ENCODE measurements at regions of chr16 and their contacts with region 1.

Region 1: GRCh38 chr16:27313422-27314160 is at the start of gene IL4R:
- DNase-seq: peak; percentile 77
- ATAC-seq: peak; percentile 49
- H3K4me3 Mint-ChIP-seq: peak within 1 kb of the TSS; percentile 88
- H3K27ac Mint-ChIP-seq: peak within 1 kb of the TSS; percentile 90
- H3K4me1 Mint-ChIP-seq: peaks cover 76% of the 10 kb centered on the region
- H3K27me3 Mint-ChIP-seq: no peaks in the 10 kb centered on the region
- CTCF ChIP-seq: no peak
- total RNA-seq, gene IL4R: 176 and 202 TPM in 2 replicates

Region 2: GRCh38 chr16:27253526-27253930 is 60.1 kb before region 1 on chr16:
- CTCF ChIA-PET with region 1: interaction called, 3 read pairs
- POLR2A ChIA-PET with region 1: interaction called, 13 read pairs
- intact Hi-C with region 1: loop called (anchors 5 kb)
- DNase-seq: no peak
- ATAC-seq: peak; percentile 40
- H3K4me3 Mint-ChIP-seq: peak overlapping the region; percentile 65
- H3K27ac Mint-ChIP-seq: peak overlapping the region; percentile 88
- H3K4me1 Mint-ChIP-seq: peaks cover 65% of the 10 kb centered on the region
- H3K27me3 Mint-ChIP-seq: no peaks in the 10 kb centered on the region
- CTCF ChIP-seq: no peak

Region 3: GRCh38 chr16:27268376-27269299 is 45.0 kb before region 1 on chr16 and contains the start of gene NSMCE1:
- CTCF ChIA-PET with region 1: interaction called, 3 read pairs
- POLR2A ChIA-PET with region 1: interaction called, 5 read pairs
- intact Hi-C with region 1: loop called (anchors 2 kb)
- DNase-seq: peak; percentile 92
- ATAC-seq: peak; percentile 97
- H3K4me3 Mint-ChIP-seq: peak within 1 kb of the TSS; percentile 96
- H3K27ac Mint-ChIP-seq: peak within 1 kb of the TSS; percentile 99
- H3K4me1 Mint-ChIP-seq: peaks cover 73% of the 10 kb centered on the region
- H3K27me3 Mint-ChIP-seq: no peaks in the 10 kb centered on the region
- CTCF ChIP-seq: no peak
- total RNA-seq, gene NSMCE1: 61.0 and 68.3 TPM in 2 replicates

Region 4: GRCh38 chr16:27301236-27301861 is 12.2 kb before region 1 on chr16:
- CTCF ChIA-PET with region 1: no interaction called
- POLR2A ChIA-PET with region 1: interaction called, 12 read pairs
- intact Hi-C with region 1: loop called (anchors 2 kb)
- DNase-seq: no peak
- ATAC-seq: no peak
- H3K4me3 Mint-ChIP-seq: no peak overlapping the region
- H3K27ac Mint-ChIP-seq: peak overlapping the region; percentile 42
- H3K4me1 Mint-ChIP-seq: peaks cover 88% of the 10 kb centered on the region
- H3K27me3 Mint-ChIP-seq: no peaks in the 10 kb centered on the region
- CTCF ChIP-seq: no peak

Region 5: DNA sequence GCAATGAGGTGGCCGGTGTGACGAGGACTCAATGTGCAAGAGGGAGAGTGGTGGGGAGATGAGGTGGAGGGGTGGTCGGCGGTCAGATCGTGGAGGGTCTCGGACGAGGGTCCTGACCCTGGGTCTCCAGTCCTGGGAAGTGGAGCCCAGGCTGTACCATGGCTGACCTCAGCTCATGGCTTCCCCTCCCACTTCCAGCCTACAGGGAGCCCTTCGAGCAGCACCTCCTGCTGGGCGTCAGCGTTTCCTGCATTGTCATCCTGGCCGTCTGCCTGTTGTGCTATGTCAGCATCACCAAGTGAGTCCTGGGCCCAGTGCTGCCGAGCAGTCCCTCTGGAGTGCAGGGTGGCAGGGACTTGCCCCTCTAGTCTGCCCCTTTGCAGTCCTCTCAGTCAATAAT is 42.0 kb after region 1 on chr16:
- CTCF ChIA-PET with region 1: interaction called, 3 read pairs
- POLR2A ChIA-PET with region 1: no interaction called
- intact Hi-C with region 1: loop called (anchors 5 kb)
- DNase-seq: no peak
- ATAC-seq: peak; percentile 56
- H3K4me3 Mint-ChIP-seq: no peak overlapping the region
- H3K27ac Mint-ChIP-seq: peak overlapping the region; percentile 54
- H3K4me1 Mint-ChIP-seq: peaks cover 6% of the 10 kb centered on the region
- H3K27me3 Mint-ChIP-seq: no peaks in the 10 kb centered on the region
- CTCF ChIP-seq: no peak

Region 6: GRCh38 chr16:27475561-27475960 is 162.0 kb after region 1 on chr16:
- CTCF ChIA-PET with region 1: no interaction called
- POLR2A ChIA-PET with region 1: no interaction called
- intact Hi-C with region 1: no loop called
- DNase-seq: no peak
- ATAC-seq: no peak
- H3K4me3 Mint-ChIP-seq: no peak overlapping the region
- H3K27ac Mint-ChIP-seq: no peak overlapping the region
- H3K4me1 Mint-ChIP-seq: no peaks in the 10 kb centered on the region
- H3K27me3 Mint-ChIP-seq: no peaks in the 10 kb centered on the region
- CTCF ChIP-seq: no peak

Region 7: DNA sequence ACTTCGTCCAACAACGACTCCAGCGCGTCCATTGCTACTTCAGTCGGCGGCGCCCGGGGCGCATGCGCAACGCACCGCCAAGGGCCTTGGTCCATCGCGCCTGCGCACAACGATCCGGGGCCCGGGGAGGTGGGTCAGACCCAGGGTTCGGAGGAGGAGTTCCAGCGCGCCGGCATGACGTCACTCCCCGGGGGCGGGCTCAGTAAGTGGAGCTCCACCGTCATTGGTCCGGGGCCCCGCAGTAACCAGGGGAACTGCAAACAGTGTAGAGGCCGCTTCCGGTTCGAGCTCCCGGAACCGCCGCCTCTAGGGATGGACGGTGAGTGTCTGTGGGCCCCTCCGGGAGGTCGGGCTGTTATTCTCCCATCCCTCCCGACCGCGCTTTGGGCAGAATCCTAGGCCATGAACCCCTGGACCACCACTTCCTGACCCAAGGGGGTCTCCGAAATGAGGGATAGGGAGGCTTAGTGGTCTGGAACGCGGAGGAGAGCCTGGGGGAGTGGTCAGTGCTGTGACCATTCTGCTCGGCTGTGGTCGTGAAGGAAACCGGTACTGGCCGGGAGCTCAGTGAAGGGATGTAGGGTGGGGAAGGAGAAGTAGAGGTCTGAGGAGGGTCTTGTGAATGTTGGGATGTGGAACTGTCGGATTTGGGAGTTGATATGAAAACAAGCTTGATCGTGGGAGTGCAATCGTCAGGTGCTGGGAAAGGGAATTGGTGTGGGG is 236.4 kb after region 1 on chr16 and contains the starts of genes GTF3C1 and KATNIP:
- CTCF ChIA-PET with region 1: no interaction called
- POLR2A ChIA-PET with region 1: no interaction called
- intact Hi-C with region 1: loop called (anchors 10 kb)
- DNase-seq: peak; percentile 100
- ATAC-seq: peak; percentile 99
- H3K4me3 Mint-ChIP-seq: peak within 1 kb of the TSS; percentile 95
- H3K27ac Mint-ChIP-seq: peak within 1 kb of the TSS; percentile 94
- H3K4me1 Mint-ChIP-seq: peaks cover 34% of the 10 kb centered on the region
- H3K27me3 Mint-ChIP-seq: no peaks in the 10 kb centered on the region
- CTCF ChIP-seq: no peak
- total RNA-seq, gene GTF3C1: 47.7 and 52.3 TPM in 2 replicates
- total RNA-seq, gene KATNIP: 32.3 and 40.4 TPM in 2 replicates